Naive thymus-derived CD4-positive, alpha-beta T cell (primary cell): ENCODE measurements at regions of chr6 and their contacts with region 1.

Region 1: DNA sequence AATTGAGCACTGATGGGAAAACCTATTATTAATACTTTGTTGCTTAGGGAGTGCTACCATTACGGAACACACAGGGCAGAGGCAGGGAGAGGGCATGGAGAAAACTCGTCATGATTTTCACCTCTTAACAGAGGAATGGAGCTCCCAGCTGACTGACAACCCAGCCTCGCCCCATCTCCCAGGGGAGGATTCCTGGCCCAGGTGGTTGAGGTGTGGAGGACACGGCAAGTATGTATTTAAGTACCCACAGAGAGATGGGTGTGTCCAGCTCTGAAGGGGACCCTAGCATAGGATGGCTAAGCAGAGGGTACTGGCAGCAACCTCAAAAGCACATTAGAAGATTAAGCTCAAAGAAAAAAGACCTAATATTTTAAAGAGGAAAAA is 261.9 kb upstream of the MOCS1 start:
- DNase-seq: no peak
- ATAC-seq: no peak
- H3K4me3 ChIP-seq: no peak overlapping the region
- H3K4me3 Mint-ChIP-seq: no peak overlapping the region
- H3K27ac ChIP-seq: no peak overlapping the region
- H3K27ac Mint-ChIP-seq: no peak overlapping the region
- H3K4me1 ChIP-seq: no peaks in the 10 kb centered on the region
- H3K4me1 Mint-ChIP-seq: no peaks in the 10 kb centered on the region
- H3K27me3 ChIP-seq: no peaks in the 10 kb centered on the region
- H3K27me3 Mint-ChIP-seq: peaks cover 0 to 12% (median 6%) of the 10 kb centered on the region in 5 donors

Region 2: GRCh38 chr6:38283734-38284362 is 1912.3 kb before region 1 on chr6:
- CTCF ChIA-PET with region 1: no interaction called
- POLR2A ChIA-PET with region 1: no interaction called
- intact Hi-C with region 1: no loop called
- DNase-seq: no peak
- ATAC-seq: no peak
- H3K4me3 ChIP-seq: no peak overlapping the region
- H3K4me3 Mint-ChIP-seq: no peak overlapping the region
- H3K27ac ChIP-seq: no peak overlapping the region
- H3K27ac Mint-ChIP-seq: no peak overlapping the region
- H3K4me1 ChIP-seq: no peaks in the 10 kb centered on the region
- H3K4me1 Mint-ChIP-seq: peaks cover 5 to 16% (median 9%) of the 10 kb centered on the region in 7 donors
- H3K27me3 ChIP-seq: no peaks in the 10 kb centered on the region
- H3K27me3 Mint-ChIP-seq: no peaks in the 10 kb centered on the region

Region 3: GRCh38 chr6:38617856-38618255 is 1578.3 kb before region 1 on chr6:
- CTCF ChIA-PET with region 1: no interaction called
- POLR2A ChIA-PET with region 1: no interaction called
- intact Hi-C with region 1: no loop called
- DNase-seq: no peak
- ATAC-seq: no peak
- H3K4me3 ChIP-seq: no peak overlapping the region
- H3K4me3 Mint-ChIP-seq: no peak overlapping the region
- H3K27ac ChIP-seq: no peak overlapping the region
- H3K27ac Mint-ChIP-seq: no peak overlapping the region
- H3K4me1 ChIP-seq: no peaks in the 10 kb centered on the region
- H3K4me1 Mint-ChIP-seq: peaks cover 0 to 29% (median 17%) of the 10 kb centered on the region in 7 donors
- H3K27me3 ChIP-seq: no peaks in the 10 kb centered on the region
- H3K27me3 Mint-ChIP-seq: no peaks in the 10 kb centered on the region

Region 4: DNA sequence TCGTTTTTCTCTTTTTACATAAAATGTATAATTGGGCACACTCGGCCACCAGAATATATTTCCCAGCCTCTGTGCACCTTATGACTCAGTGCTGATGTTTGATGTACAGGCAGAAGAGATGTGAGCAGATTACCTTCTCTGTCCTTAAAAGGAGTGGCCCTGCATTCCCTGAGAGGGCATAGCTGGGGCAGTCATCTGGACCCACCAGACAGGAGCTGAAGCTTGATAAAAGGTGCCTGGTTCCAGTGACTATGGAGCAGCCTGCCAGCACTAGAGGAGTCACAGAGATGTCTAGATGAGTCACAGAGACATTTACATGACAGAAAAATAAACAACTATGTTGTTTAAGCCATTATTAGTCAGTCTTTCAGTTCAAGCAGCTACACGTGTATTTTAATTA is 24.8 kb before region 1 on chr6:
- CTCF ChIA-PET with region 1: no interaction called
- POLR2A ChIA-PET with region 1: no interaction called
- intact Hi-C with region 1: loop called in 1 of 2 experiments (anchors 1 kb)
- DNase-seq: no peak
- ATAC-seq: no peak
- H3K4me3 ChIP-seq: no peak overlapping the region
- H3K4me3 Mint-ChIP-seq: no peak overlapping the region
- H3K27ac ChIP-seq: no peak overlapping the region
- H3K27ac Mint-ChIP-seq: no peak overlapping the region
- H3K4me1 ChIP-seq: no peaks in the 10 kb centered on the region
- H3K4me1 Mint-ChIP-seq: no peaks in the 10 kb centered on the region
- H3K27me3 ChIP-seq: no peaks in the 10 kb centered on the region
- H3K27me3 Mint-ChIP-seq: peaks cover 2 to 30% (median 24%) of the 10 kb centered on the region in 5 donors

Region 5: GRCh38 chr6:40349123-40349900 is 153.2 kb after region 1 on chr6:
- CTCF ChIA-PET with region 1: no interaction called
- POLR2A ChIA-PET with region 1: no interaction called
- intact Hi-C with region 1: no loop called
- DNase-seq: no peak
- ATAC-seq: no peak
- H3K4me3 ChIP-seq: no peak overlapping the region
- H3K4me3 Mint-ChIP-seq: no peak overlapping the region
- H3K27ac ChIP-seq: no peak overlapping the region
- H3K27ac Mint-ChIP-seq: no peak overlapping the region
- H3K4me1 ChIP-seq: no peaks in the 10 kb centered on the region
- H3K4me1 Mint-ChIP-seq: peaks cover 0 to 5% (median 0%) of the 10 kb centered on the region in 7 donors
- H3K27me3 ChIP-seq: no peaks in the 10 kb centered on the region
- H3K27me3 Mint-ChIP-seq: no peaks in the 10 kb centered on the region

Region 6: GRCh38 chr6:40743226-40743625 is 547.1 kb after region 1 on chr6:
- CTCF ChIA-PET with region 1: no interaction called
- POLR2A ChIA-PET with region 1: no interaction called
- intact Hi-C with region 1: no loop called
- DNase-seq: no peak
- ATAC-seq: no peak
- H3K4me3 ChIP-seq: no peak overlapping the region
- H3K4me3 Mint-ChIP-seq: no peak overlapping the region
- H3K27ac ChIP-seq: no peak overlapping the region
- H3K27ac Mint-ChIP-seq: no peak overlapping the region
- H3K4me1 ChIP-seq: no peaks in the 10 kb centered on the region
- H3K4me1 Mint-ChIP-seq: no peaks in the 10 kb centered on the region
- H3K27me3 ChIP-seq: no peaks in the 10 kb centered on the region
- H3K27me3 Mint-ChIP-seq: peaks cover 0 to 19% (median 12%) of the 10 kb centered on the region in 5 donors